ENCODE measurements at regions of chr4 and their contacts with region 1.

Region 1: DNA sequence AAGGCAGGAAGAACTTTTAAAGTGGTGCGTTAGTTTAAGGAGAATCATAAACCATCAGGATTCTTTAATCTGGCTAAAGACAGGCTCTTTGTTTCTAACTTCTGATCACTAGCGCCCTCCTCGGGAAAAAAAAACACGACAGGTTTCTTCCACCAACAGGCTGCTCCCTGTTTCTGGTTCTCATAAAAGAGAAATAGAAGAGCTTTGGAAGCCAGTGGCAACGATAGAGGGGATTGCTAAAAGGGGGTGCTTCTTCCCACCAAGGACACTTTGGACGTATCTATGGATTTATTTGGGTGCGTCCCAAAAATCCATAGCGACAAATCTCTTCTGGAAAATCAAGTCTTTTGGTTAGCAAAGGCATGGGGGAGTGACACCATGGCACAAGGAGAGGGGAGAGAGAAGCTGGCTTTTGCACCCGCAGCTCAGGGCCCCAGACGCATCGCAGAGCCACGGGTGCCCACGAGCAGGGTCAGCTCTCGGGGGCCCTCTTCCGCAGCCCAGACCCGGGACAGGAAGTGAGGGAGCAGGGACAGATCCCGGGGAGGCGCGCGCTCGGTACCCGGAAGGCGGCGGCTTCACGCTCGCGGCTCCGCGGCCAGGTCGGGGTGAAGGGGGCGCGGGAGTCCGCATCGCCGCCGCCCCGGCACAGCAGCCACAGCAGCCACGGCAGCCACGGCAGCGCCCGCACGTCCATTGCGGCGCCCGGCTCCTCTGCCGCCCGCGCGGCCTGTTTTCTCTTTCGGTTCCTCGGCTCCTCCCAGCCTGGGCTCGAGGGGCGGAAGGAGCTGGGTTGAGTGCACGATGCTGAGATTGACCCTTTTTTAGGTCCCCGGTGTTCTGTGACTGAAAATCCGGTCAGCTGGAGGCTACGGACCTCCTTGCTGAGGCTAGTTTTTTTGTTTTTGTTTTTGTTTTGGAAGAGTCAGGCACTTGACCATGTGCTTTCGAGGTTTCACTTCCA is at the start of gene CTSO:
- DNase-seq: peak; percentile 66 to 89 (median 74)
- ATAC-seq: peak; percentile 91 to 97 (median 95)
- H3K4me3 ChIP-seq: peak within 1 kb of the TSS; percentile 45 to 87 (median 66)
- H3K27ac ChIP-seq: peak within 1 kb of the TSS; percentile 87 to 99 (median 98)
- H3K4me1 ChIP-seq: peaks cover 0 to 4% (median 0%) of the 10 kb centered on the region in 3 donors
- H3K27me3 ChIP-seq: no peaks in the 10 kb centered on the region
- CTCF ChIP-seq: peak; percentile 20 to 43 (median 32)
- total RNA-seq, gene CTSO: 5.8 to 15.3 (median 8.5) TPM

Region 2: DNA sequence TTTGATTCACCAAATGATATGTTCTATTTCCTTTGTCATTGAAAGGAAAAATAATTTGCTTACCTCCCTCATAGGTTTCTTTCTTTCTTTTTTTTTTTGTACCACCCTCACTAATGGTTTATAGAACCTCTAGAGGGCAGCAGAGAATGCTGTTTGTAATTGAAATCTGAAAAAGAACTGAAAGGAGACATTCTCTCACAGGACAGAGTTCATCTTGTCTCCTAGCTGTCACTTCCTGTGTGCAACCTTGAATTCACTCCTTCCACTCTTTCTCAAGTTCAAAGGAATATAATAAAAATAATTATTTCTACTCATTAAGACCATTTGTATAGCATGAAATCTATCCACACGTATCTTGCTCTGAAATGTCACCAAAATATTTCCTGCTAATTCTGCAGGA is 143.6 kb before region 1 on chr4:
- intact Hi-C with region 1: loop called in 1 of 3 experiments (anchors 5 kb)
- DNase-seq: no peak
- ATAC-seq: peak; percentile 48 to 89 (median 88)
- H3K4me3 ChIP-seq: no peak overlapping the region
- H3K27ac ChIP-seq: no peak overlapping the region
- H3K4me1 ChIP-seq: no peaks in the 10 kb centered on the region
- H3K27me3 ChIP-seq: no peaks in the 10 kb centered on the region
- CTCF ChIP-seq: peak; percentile 20 to 64 (median 40)

Measured in pancreas (tissue), 10 donors.